ENCODE measurements at regions of chr1 and their contacts with region 1.

Region 1: DNA sequence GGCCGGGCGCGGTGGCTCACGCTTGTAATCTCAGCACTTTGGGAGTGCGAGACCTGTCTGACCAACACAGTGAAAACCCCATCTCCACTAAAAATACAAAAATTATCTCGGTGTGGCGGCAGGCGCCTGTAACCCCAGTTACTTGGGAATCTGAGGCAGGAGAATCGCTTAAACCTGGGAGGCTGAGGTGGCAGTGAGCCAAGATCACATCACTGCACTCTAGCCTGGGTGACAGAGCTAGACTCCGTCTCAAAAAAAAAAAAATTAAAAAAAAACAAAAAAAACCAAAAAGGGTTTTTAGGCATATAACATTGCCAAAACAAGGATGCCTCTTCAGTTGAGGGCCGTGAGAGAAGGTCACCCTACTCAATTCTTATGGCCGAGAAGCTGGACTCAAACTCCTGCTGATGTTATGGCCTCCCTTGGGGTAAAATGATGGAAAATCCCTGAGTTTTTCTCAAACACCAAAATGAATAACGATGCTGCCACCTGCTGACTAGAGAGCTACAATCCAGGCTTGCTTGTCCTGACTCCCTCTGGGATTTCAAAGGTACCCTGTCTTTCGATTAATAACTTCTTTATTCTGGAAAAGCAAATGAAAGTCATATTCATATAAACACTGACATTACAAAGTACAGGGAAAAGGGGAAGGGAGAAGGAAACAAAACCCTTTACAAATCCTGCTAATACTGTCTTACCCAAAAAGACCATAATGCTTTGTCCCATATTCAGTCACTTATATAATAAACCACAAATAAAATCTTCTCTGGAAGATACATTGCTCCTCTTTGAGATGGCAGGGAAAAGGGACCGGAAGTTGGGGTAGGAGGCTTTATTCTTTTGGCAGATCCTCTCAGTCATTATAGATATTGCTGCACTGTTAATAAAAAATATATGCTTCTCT is 10.7 kb downstream of the RAB42 start:
- H3K4me3 Mint-ChIP-seq: no peak overlapping the region
- H3K27ac Mint-ChIP-seq: no peak overlapping the region
- H3K4me1 Mint-ChIP-seq: no peaks in the 10 kb centered on the region
- H3K27me3 Mint-ChIP-seq: no peaks in the 10 kb centered on the region

Region 2: GRCh38 chr1:28412731-28413130 is 190.1 kb before region 1 on chr1:
- intact Hi-C with region 1: loop called (anchors 5 kb)
- H3K4me3 Mint-ChIP-seq: no peak overlapping the region
- H3K27ac Mint-ChIP-seq: no peak overlapping the region
- H3K4me1 Mint-ChIP-seq: peaks cover 8% of the 10 kb centered on the region
- H3K27me3 Mint-ChIP-seq: no peaks in the 10 kb centered on the region

Region 3: DNA sequence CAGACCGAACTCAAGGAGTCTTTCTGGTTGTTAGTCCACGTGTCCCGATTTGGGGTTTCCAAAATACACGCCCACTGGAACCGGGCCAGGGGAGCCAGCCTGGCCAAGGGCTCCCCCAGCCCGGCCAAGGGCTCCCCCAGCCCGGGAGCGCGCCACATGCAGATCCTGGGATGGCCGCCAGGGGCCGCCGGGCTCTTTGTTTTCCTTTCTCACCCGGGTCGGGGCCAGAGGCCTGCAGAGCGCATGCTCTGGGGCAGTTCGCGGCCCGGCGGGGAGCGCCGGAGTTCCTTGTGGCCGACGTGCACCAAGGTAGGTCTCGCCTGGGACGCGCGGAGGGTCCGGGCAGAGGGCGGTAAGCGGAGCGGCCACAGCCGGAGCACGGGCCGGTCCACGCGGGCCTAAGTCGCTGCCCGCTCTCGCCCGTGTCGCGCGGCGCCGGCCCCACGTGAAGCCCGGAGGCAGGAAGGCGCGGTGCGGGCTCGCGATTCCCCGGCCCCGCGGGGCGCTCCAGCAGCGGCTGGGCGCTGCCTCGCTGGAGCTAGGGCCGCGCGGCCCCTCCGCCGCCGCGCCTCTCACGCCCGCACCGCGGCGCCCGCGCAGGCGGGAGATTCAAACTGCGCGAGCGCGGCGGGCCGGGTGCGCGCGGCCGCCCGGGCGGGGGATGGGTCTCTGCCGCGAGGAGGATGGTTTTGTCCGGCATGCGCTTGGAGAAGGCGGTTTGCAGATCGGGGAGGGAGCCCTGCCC is 84.6 kb before region 1 on chr1:
- intact Hi-C with region 1: loop called (anchors 2 kb)
- H3K4me3 Mint-ChIP-seq: peak overlapping the region; percentile 86
- H3K27ac Mint-ChIP-seq: peak overlapping the region; percentile 41
- H3K4me1 Mint-ChIP-seq: peaks cover 27% of the 10 kb centered on the region
- H3K27me3 Mint-ChIP-seq: no peaks in the 10 kb centered on the region

Region 4: GRCh38 chr1:28540651-28541050 is 62.1 kb before region 1 on chr1:
- intact Hi-C with region 1: no loop called
- H3K4me3 Mint-ChIP-seq: no peak overlapping the region
- H3K27ac Mint-ChIP-seq: no peak overlapping the region
- H3K4me1 Mint-ChIP-seq: no peaks in the 10 kb centered on the region
- H3K27me3 Mint-ChIP-seq: no peaks in the 10 kb centered on the region